ENCODE measurements at regions of chr17 and their contacts with region 1.

Region 1: DNA sequence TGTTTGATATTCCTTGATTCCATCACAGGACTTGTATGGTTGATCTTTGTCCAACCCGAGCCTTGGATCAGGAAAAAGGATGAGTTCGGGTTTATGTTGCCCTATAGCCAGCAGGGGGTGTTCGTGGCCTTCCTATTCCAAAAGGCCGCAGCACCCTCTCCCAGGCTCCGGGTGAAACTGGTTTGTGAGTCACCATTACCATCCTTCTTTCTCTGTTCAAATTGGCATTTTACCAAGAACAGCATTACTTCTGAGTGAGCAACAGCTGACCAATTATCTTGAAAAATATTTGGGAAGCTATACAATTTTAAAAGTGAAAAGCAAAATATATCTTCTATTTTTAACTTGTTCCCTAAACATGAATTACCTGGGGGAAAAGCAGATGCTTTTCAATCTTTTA is 24.3 kb upstream of the KRT20 start:
- DNase-seq: peak; percentile 95
- ATAC-seq: peak; percentile 88
- H3K4me3 ChIP-seq: no peak overlapping the region
- H3K27ac ChIP-seq: peak overlapping the region; percentile 77
- H3K4me1 ChIP-seq: peaks cover 57 to 69% of the 10 kb centered on the region in 2 experiments
- H3K27me3 ChIP-seq: no peaks in the 10 kb centered on the region
- CTCF ChIP-seq: peak; percentile 76 to 88 (median 81)
- POLR2A ChIP-seq: no peak
- RAD21 ChIP-seq: peak; percentile 99

Region 2: GRCh38 chr17:40615295-40615988 is 293.9 kb before region 1 on chr17:
- CTCF ChIA-PET with region 1: interaction called, 3 read pairs
- POLR2A ChIA-PET with region 1: no interaction called
- RAD21 ChIA-PET with region 1: no interaction called
- intact Hi-C with region 1: loop called (anchors 2 kb)
- DNase-seq: peak; percentile 69
- ATAC-seq: peak; percentile 90
- H3K4me3 ChIP-seq: no peak overlapping the region
- H3K27ac ChIP-seq: no peak overlapping the region
- H3K4me1 ChIP-seq: peaks cover 1 to 17% of the 10 kb centered on the region in 2 experiments; a peak in 3 of 4 replicates
- H3K27me3 ChIP-seq: no peaks in the 10 kb centered on the region
- CTCF ChIP-seq: peak; percentile 72 to 95 (median 75)
- POLR2A ChIP-seq: no peak
- RAD21 ChIP-seq: peak; percentile 87

Region 3: DNA sequence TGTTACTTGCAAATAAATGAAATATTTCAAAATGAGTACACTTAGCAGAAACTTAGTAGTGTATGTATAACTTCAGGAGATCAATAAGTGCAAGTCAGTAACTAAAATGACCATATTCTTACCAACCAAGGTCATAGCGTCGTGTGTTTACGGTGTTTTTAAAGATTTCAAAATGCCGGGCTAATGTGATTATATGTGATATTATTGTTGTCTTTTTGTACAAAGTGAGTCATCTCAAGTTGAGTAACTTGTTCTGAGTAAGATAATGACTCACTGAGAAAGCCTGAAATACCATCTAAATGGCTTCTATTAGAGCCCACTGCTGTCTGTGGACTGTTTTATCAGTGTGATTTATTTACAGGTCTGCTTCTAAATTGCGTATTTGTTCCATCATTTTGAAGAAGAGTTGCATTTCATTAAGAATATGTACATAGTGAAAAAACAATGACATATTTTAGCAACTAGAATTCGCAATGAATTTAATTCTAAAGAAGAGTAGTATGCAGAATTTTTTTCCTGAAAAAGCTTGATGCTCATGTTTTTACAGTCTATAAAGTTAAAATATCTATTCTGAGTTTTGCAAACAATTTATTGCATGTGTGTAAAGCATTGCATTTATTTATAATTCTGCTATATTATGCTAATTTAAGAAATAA is 55.1 kb before region 1 on chr17:
- CTCF ChIA-PET with region 1: interaction called, 4 read pairs
- POLR2A ChIA-PET with region 1: no interaction called
- RAD21 ChIA-PET with region 1: interaction called in 1 of 2 experiments, 3 read pairs
- intact Hi-C with region 1: loop called (anchors 2 kb)
- DNase-seq: peak; percentile 71
- ATAC-seq: peak; percentile 71
- H3K4me3 ChIP-seq: no peak overlapping the region
- H3K27ac ChIP-seq: peak overlapping the region; percentile 25; the same call in 1 of the 2 replicates
- H3K4me1 ChIP-seq: peaks cover 11 to 50% of the 10 kb centered on the region in 2 experiments
- H3K27me3 ChIP-seq: no peaks in the 10 kb centered on the region
- CTCF ChIP-seq: no peak
- POLR2A ChIP-seq: no peak
- RAD21 ChIP-seq: 0 out of 2 replicates have a peak, but pooled peaks have one; percentile 17

Region 4: DNA sequence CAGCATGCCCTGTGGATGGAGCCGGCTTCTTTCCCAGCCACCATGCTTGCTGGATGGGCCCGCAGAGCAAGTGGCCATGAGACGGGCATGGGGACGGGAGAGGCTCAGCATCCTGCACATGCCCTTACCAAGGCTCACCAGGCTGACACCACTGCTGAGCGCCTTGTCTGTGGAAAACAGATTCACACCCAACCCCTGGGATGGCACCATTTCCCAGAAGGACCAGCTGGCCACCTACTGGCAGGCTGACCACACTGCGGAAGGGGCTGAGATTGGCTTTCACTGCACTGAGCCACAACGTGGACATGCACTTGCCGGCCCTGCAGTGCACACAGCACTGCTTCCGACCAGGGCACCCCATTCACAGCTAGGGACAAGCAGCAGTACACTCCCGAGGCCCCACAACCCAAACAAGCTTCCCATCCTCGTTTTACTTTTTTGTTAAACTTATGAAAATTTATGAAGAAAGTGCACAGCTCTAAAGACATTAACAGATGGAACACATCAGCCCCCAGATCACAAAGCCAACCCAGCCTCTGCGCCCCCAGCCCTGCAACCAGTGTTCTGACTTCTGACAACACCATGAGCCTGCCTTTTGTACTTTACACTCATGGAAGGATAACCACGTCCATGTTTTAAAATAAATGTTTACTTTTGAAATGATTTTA is 420.1 kb after region 1 on chr17:
- CTCF ChIA-PET with region 1: interaction called, 15 read pairs
- POLR2A ChIA-PET with region 1: no interaction called
- RAD21 ChIA-PET with region 1: no interaction called
- intact Hi-C with region 1: loop called (anchors 1 kb)
- DNase-seq: peak; percentile 40
- ATAC-seq: peak; percentile 90
- H3K4me3 ChIP-seq: no peak overlapping the region
- H3K27ac ChIP-seq: peak overlapping the region; percentile 46; the same call in 1 of the 2 replicates
- H3K4me1 ChIP-seq: peaks cover 3 to 21% of the 10 kb centered on the region in 2 experiments; a peak in 3 of 4 replicates
- H3K27me3 ChIP-seq: no peaks in the 10 kb centered on the region
- CTCF ChIP-seq: peak; percentile 59 to 93 (median 82); a peak in 5 of 6 replicates
- POLR2A ChIP-seq: no peak
- RAD21 ChIP-seq: peak; percentile 90

Region 5: GRCh38 chr17:41496820-41497408 is 587.6 kb after region 1 on chr17:
- CTCF ChIA-PET with region 1: interaction called, 7 read pairs
- POLR2A ChIA-PET with region 1: interaction called, 3 read pairs
- RAD21 ChIA-PET with region 1: no interaction called
- intact Hi-C with region 1: loop called (anchors 1 kb)
- DNase-seq: peak; percentile 87
- ATAC-seq: peak; percentile 93
- H3K4me3 ChIP-seq: peak overlapping the region in 1 of 2 experiments; percentile 25; a peak in 1 of 4 replicates
- H3K27ac ChIP-seq: peak overlapping the region; percentile 61
- H3K4me1 ChIP-seq: peaks cover 34 to 90% of the 10 kb centered on the region in 2 experiments
- H3K27me3 ChIP-seq: no peaks in the 10 kb centered on the region
- CTCF ChIP-seq: peak; percentile 94 to 96 (median 95)
- POLR2A ChIP-seq: peak; percentile 74
- RAD21 ChIP-seq: peak; percentile 100

Region 6: GRCh38 chr17:41530062-41531051 is 621.0 kb after region 1 on chr17:
- CTCF ChIA-PET with region 1: interaction called, 11 read pairs
- POLR2A ChIA-PET with region 1: interaction called, 7 read pairs
- RAD21 ChIA-PET with region 1: no interaction called
- intact Hi-C with region 1: loop called (anchors 2 kb)
- DNase-seq: peak; percentile 86
- ATAC-seq: peak; percentile 66
- H3K4me3 ChIP-seq: peak overlapping the region; percentile 18 to 95
- H3K27ac ChIP-seq: peak overlapping the region; percentile 99
- H3K4me1 ChIP-seq: peaks cover 36 to 73% of the 10 kb centered on the region in 2 experiments
- H3K27me3 ChIP-seq: no peaks in the 10 kb centered on the region
- CTCF ChIP-seq: no peak
- POLR2A ChIP-seq: peak; percentile 45
- RAD21 ChIP-seq: no peak